GM18951 (cell line): ENCODE measurements at regions of chr6 and their contacts with region 1.

Region 1: DNA sequence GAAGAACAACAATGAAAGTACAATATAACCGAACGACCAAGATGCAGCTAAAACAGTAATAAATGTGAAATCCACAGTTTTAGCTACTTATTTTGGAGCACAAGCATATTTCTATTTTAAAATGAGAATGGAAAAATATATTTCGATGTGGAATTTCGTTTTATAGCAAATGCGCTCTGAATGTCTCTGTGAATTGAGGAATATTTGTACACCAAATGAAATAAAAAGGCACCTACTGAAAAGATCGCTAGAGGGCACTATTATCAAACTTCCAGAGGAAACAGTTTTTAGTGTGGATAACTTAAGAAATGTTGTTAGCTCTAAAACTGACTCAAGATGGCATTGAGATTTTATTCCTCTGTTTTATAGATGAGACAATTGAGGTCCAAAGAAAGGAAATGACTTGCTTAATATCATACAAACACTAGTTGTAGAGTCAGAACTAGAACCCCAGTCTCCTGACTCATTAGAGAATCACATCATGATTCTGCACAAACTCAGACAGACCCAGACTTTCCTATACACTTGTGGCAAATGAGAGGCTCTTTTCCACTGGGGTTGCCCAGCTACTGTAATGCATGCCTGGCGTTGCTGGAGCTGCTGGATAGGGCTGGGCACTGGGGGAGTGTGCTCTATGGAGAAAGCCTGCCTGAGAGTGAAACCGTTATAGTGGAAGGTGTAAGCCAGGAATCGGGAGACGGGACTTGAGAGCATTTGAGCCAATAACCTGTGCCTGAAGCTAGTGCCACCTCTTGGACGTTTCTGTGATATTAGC is 51.9 kb downstream of the GCLC start:
- POLR2A ChIP-seq: no peak

Region 2: DNA sequence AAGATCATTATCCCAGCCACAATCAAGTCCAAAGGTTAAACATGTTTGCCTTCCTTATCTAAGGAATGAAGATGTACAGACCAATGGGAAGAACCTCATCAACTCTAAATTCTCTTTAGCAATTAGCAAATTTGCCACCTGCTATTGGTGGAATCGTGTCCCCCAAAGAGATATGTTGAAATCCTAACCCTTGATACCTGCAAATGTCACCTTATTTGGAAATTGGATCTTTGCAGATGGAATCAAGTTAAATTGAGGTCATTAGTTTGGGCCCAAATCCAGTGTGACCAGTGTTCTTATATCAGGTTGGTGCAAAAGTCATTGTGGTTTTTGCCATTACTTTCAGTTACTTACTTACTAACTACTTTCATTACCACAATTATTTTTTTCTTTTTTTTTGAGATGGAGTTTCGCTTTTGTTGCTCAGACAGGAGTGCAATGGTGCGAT is 141.2 kb after region 1 on chr6:
- in situ Hi-C with region 1: loop called (anchors 10 kb)
- POLR2A ChIP-seq: no peak